ENCODE measurements at regions of chr7 and their contacts with region 1.

Region 1: DNA sequence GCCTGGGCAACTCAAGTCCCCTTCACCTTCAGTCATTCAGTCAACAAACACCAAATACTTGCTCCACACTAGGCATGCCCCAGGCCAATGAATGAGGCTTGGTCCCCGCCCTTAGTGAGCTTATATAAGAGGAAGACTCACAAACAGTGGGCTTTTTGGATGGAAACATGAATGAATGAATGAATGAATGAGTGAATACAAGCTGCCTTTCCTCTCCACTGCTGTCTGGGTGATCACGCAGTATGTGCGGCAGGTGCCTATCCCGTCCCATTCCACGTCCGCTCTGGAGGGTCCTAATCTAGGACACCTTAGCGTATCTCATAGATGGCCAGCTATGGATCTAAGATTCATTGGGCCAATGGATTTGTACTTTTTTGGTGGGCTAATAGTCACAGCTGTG is 19.8 kb upstream of the GTF2I start:
- DNase-seq: no peak
- ATAC-seq: no peak
- H3K4me3 Mint-ChIP-seq: no peak overlapping the region
- H3K27ac Mint-ChIP-seq: no peak overlapping the region
- H3K4me1 Mint-ChIP-seq: peaks cover 8% of the 10 kb centered on the region
- H3K27me3 Mint-ChIP-seq: no peaks in the 10 kb centered on the region
- CTCF ChIP-seq: no peak

Region 2: GRCh38 chr7:74575138-74575727 is 62.5 kb before region 1 on chr7:
- CTCF ChIA-PET with region 1: no interaction called
- POLR2A ChIA-PET with region 1: no interaction called
- intact Hi-C with region 1: no loop called
- DNase-seq: no peak
- ATAC-seq: no peak
- H3K4me3 Mint-ChIP-seq: no peak overlapping the region
- H3K27ac Mint-ChIP-seq: no peak overlapping the region
- H3K4me1 Mint-ChIP-seq: peaks cover 3% of the 10 kb centered on the region
- H3K27me3 Mint-ChIP-seq: no peaks in the 10 kb centered on the region
- CTCF ChIP-seq: no peak

Region 3: DNA sequence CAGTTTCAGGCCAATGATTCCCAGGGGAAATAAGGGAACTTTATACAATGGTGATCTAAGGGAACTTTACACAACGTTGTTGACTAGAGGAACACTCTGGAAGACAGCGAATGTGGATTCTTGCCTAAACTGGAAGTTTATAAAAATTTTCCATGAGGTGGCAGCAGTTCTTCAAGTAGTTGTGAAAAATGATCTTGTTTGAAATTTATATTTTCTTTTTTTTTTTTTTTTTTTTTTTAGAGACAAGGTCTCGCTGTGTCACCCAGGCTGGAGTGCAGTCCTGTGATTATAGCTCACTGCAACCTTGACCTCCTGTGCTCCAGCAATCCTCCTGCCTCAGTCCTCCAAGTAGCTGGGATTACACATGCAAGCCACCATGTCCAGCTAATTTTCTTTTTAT is 12.3 kb before region 1 on chr7:
- CTCF ChIA-PET with region 1: interaction called, 3 read pairs
- POLR2A ChIA-PET with region 1: no interaction called
- intact Hi-C with region 1: loop called (anchors 2 kb)
- DNase-seq: no peak
- ATAC-seq: peak; percentile 42
- H3K4me3 Mint-ChIP-seq: no peak overlapping the region
- H3K27ac Mint-ChIP-seq: no peak overlapping the region
- H3K4me1 Mint-ChIP-seq: peaks cover 3% of the 10 kb centered on the region
- H3K27me3 Mint-ChIP-seq: no peaks in the 10 kb centered on the region
- CTCF ChIP-seq: no peak

Region 4: DNA sequence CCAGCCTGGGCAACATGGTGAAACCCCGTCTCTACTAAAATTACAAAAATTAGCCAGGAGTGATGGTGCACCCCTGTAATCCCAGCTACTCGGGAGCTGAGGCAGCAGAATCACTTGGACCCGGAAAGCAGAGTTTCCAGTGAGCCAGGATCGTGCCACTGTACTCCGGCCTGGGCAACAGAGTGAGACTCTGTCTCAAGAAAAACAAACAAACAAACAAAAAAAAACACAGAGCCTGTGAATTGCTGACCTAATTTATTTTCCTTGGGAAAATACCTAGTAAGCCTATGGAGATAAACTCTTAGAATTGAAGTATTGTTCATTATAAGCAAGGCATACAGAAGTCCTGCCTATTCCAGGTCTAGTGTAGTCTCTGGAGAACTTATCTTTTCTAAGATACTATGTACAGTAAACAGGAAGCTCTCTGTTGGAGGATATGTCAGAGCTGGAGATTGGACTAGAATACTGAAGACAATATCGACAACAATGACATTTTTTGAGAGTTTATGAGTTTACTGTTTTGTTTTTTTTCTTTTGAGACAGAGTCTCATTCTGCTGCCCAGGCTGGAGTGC is 34.7 kb after region 1 on chr7:
- CTCF ChIA-PET with region 1: no interaction called
- POLR2A ChIA-PET with region 1: no interaction called
- intact Hi-C with region 1: loop called (anchors 5 kb)
- DNase-seq: no peak
- ATAC-seq: no peak
- H3K4me3 Mint-ChIP-seq: no peak overlapping the region
- H3K27ac Mint-ChIP-seq: peak overlapping the region; percentile 50
- H3K4me1 Mint-ChIP-seq: peaks cover 61% of the 10 kb centered on the region
- H3K27me3 Mint-ChIP-seq: no peaks in the 10 kb centered on the region
- CTCF ChIP-seq: no peak